Dendritic cell treated with granulocyte-macrophage colony-stimulating factor and Interleukin-4, amounts not matched to agents 40 ng/mL and 50 ng/mL, for 4 days (primary cell): ENCODE measurements at regions of chr9 and their contacts with region 1.

Region 1: GRCh38 chr9:135926402-135927194 is 19.3 kb upstream of the CAMSAP1 start:
- H3K4me3 Mint-ChIP-seq: no peak overlapping the region
- H3K27ac Mint-ChIP-seq: peak overlapping the region; percentile 69
- H3K4me1 Mint-ChIP-seq: peaks cover 58% of the 10 kb centered on the region
- H3K27me3 Mint-ChIP-seq: no peaks in the 10 kb centered on the region

Region 2: DNA sequence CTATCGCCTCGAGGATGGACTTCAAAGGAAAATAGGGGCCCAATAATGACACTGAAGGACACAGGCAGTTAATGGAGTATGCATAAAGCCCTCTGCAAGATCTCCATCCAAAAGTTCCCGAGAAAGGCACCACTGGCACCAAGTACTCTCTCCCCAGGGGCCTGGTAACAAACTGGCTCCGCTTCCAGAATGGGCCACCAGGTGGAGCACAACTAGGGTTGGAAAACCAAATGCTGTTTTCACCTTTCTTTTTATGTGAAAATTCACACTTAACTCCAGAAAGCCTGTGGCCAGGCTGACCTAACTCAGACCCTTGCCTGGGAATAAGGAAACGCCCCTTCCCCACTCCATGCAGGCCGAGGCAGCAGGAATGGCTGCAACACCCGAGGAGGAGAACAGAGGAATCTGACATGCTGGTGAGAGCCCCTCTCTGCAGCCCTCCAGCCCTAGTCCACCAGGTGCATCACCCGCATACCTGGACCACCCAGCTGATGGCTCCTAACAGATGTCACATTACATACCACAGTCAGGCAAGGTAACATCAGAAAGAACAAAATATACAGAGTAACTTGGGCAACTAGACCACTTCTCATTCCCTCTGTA is 62.0 kb before region 1 on chr9:
- intact Hi-C with region 1: loop called (anchors 10 kb)
- H3K4me3 Mint-ChIP-seq: no peak overlapping the region
- H3K27ac Mint-ChIP-seq: no peak overlapping the region
- H3K4me1 Mint-ChIP-seq: no peaks in the 10 kb centered on the region
- H3K27me3 Mint-ChIP-seq: no peaks in the 10 kb centered on the region

Region 3: GRCh38 chr9:135907431-135908092 is 19.0 kb before region 1 on chr9 and contains the start of gene CAMSAP1:
- intact Hi-C with region 1: loop called (anchors 2 kb)
- H3K4me3 Mint-ChIP-seq: peak within 1 kb of the TSS; percentile 70
- H3K27ac Mint-ChIP-seq: peak within 1 kb of the TSS; percentile 61
- H3K4me1 Mint-ChIP-seq: peaks cover 79% of the 10 kb centered on the region
- H3K27me3 Mint-ChIP-seq: no peaks in the 10 kb centered on the region

Region 4: DNA sequence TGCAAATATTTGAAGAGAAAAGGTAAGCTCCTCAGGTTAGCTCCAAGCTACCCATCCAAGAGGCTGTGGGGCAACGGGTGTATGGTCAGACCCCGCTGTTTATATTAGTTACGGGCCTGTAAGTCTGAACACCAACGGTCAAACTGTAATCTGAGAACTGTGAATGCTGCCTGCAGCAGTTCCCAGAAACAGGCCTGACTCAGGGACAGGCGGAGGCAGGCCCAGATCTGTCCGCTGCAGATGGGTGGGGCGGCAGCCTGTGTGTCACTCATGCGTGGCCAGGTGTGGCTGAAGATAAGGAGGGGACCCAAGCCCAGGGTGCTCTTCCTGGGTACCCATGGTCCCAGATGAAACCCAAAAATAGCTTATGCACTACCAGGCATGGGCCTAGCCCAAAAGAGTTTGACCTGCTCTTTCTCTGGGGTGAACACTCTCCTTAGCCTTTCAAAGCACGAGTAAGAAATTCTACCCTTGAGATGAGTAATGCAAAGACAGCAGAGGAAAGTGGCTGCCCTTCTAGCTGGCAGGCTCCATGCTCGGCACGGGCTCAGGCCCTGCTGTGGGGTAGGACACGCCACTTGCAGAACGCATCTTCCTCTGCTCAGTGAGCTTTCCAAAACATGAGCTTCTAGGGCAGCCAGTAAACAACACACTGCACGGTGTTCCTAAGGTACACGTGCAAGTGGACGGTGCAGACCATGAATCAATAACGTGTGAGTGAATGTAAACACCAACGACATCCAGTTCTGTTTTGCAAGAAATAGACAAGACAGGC is 25.5 kb after region 1 on chr9:
- intact Hi-C with region 1: no loop called
- H3K4me3 Mint-ChIP-seq: no peak overlapping the region
- H3K27ac Mint-ChIP-seq: no peak overlapping the region
- H3K4me1 Mint-ChIP-seq: peaks cover 30% of the 10 kb centered on the region
- H3K27me3 Mint-ChIP-seq: no peaks in the 10 kb centered on the region

Region 5: DNA sequence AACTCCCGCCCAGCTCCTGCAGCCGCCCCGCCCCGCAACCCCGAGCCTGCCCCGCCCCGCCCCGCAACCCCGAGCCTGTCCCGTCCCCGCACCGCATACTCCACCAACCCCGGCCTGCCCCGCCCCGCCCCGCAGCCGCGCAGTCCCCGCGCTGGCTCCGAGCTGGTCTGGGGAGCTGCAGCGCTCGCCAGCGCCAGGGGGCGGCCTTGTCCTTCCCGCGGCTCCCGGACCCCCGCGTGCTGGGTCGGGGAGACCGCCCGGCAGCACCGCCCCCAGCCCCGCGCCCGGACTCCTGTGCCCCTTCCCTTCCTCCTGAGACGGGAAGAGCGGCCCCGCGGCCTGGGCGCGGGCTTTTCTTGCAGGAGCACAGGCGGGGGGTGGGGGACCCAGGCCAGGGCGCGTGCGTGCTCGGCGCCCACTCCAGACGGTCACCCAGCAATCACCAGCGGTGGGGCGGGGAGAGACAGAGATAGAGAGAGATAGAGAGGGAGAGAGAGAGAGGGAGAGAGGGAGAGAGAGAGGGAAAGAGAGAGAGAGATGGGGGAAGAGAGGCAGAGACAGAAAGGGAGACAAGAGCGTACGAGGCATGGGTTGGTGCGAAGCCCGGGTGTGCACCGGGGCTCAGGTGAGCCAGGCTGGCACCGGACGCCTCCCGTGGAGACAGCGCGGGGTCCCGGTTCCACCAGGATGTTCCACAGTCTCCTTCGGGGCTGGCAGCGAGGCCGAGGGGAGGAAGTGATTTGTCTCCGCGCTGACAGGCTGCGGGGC is 206.8 kb after region 1 on chr9:
- intact Hi-C with region 1: no loop called
- H3K4me3 Mint-ChIP-seq: peak overlapping the region; percentile 54
- H3K27ac Mint-ChIP-seq: no peak overlapping the region
- H3K4me1 Mint-ChIP-seq: peaks cover 7% of the 10 kb centered on the region
- H3K27me3 Mint-ChIP-seq: peaks cover 81% of the 10 kb centered on the region